MCF 10A (cell line): ENCODE measurements at regions of chr2 and their contacts with region 1.

Region 1: DNA sequence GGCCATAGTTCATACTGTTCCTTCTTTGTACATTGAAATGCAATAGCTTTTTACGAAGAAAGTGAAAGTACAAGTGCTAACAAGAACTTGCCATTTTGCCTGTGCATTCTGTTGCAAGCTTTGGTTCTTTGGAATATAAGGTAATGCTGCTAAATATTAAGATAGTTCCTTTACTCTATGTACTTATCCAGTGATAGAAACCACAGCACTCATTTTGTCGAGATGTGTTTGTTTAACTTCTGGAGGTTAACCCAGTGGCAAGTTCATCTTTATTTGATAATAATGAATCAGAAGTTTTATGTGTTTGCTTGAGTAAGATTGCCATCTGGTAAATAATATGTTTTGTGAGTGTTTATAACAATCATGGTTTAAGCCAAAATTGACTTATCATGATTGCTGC is 373.1 kb upstream of the FANCL start:
- DNase-seq: no peak
- H3K4me3 Mint-ChIP-seq: peak overlapping the region; percentile 19
- H3K27ac Mint-ChIP-seq: peak overlapping the region; percentile 67
- H3K4me1 Mint-ChIP-seq: peaks cover 7% of the 10 kb centered on the region
- H3K27me3 Mint-ChIP-seq: no peaks in the 10 kb centered on the region
- CTCF ChIP-seq: no peak

Region 2: GRCh38 chr2:58604096-58604495 is 10.1 kb before region 1 on chr2:
- CTCF ChIA-PET with region 1: interaction called, 3 read pairs
- POLR2A ChIA-PET with region 1: interaction called, 12 read pairs
- intact Hi-C with region 1: no loop called
- DNase-seq: no peak
- H3K4me3 Mint-ChIP-seq: no peak overlapping the region
- H3K27ac Mint-ChIP-seq: no peak overlapping the region
- H3K4me1 Mint-ChIP-seq: peaks cover 38% of the 10 kb centered on the region
- H3K27me3 Mint-ChIP-seq: no peaks in the 10 kb centered on the region
- CTCF ChIP-seq: no peak